PC-3 (cell line): ENCODE measurements at regions of chrX and their contacts with region 1.

Region 1: DNA sequence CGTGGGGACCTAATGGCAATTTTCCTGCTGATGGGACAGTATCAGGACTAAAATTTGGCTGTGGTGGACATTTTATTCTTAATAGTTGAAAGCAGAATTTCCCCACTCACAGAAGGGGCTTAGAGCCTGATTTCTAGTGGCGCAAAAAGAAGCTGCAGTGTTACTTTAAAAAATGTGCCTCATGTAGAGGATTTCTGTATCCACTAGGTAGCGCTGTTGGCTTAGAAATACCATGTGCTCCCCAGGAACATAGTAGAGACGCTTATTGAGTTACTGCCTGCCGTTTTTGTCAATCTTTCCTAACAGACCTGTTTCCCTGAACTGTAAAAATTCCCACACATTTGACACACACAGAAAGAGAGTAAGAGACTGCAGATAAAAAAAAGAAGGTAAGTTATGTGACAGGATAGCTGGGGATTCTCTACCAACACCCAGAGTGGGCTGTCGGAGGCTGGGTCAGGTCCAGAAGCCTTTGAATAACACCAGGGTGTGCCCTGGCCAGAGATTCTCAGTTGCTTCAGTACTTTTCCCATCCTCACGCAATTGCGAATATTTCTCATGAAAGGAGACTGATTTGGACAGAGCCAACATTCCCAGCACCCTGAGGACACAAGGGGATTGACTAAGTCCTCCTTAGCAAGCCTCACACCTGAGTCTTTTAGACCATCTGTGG is 88.4 kb downstream of the ZXDA start:
- DNase-seq: peak; percentile 75
- ATAC-seq: peak; percentile 77
- H3K4me3 ChIP-seq: peak overlapping the region; percentile 37
- H3K27ac ChIP-seq: no peak overlapping the region
- H3K4me1 ChIP-seq: no peaks in the 10 kb centered on the region
- H3K27me3 ChIP-seq: no peaks in the 10 kb centered on the region
- CTCF ChIP-seq: peak; percentile 74

Region 2: GRCh38 chrX:57528670-57529255 is 293.1 kb before region 1 on chrX:
- CTCF ChIA-PET with region 1: no interaction called
- POLR2A ChIA-PET with region 1: no interaction called
- intact Hi-C with region 1: loop called (anchors 5 kb)
- DNase-seq: peak; percentile 56
- ATAC-seq: peak; percentile 95
- H3K4me3 ChIP-seq: no peak overlapping the region
- H3K27ac ChIP-seq: no peak overlapping the region
- H3K4me1 ChIP-seq: no peaks in the 10 kb centered on the region
- H3K27me3 ChIP-seq: no peaks in the 10 kb centered on the region
- CTCF ChIP-seq: peak; percentile 89

Region 3: DNA sequence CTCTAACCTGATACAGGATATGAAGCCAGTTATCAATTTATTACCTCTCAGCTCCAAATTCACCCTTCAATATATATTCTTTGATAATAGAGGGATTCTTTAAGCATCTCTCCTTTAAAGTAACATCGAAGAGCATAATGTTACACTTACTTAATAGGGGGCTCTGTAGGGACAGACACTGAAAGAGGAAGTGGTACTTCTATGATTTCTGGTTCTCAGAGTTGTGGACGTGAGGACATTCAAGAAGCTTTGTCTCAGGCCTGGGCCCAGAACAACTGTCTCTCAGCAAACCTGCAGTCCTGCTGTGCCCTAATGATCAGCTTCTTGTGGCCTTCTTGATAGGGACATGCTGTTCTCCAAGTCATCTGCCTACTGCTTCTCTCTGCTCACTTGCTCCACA is 234.2 kb before region 1 on chrX:
- CTCF ChIA-PET with region 1: no interaction called
- POLR2A ChIA-PET with region 1: no interaction called
- intact Hi-C with region 1: loop called (anchors 5 kb)
- DNase-seq: no peak
- ATAC-seq: no peak
- H3K4me3 ChIP-seq: no peak overlapping the region
- H3K27ac ChIP-seq: no peak overlapping the region
- H3K4me1 ChIP-seq: peaks cover 21% of the 10 kb centered on the region
- H3K27me3 ChIP-seq: no peaks in the 10 kb centered on the region
- CTCF ChIP-seq: no peak

Region 4: DNA sequence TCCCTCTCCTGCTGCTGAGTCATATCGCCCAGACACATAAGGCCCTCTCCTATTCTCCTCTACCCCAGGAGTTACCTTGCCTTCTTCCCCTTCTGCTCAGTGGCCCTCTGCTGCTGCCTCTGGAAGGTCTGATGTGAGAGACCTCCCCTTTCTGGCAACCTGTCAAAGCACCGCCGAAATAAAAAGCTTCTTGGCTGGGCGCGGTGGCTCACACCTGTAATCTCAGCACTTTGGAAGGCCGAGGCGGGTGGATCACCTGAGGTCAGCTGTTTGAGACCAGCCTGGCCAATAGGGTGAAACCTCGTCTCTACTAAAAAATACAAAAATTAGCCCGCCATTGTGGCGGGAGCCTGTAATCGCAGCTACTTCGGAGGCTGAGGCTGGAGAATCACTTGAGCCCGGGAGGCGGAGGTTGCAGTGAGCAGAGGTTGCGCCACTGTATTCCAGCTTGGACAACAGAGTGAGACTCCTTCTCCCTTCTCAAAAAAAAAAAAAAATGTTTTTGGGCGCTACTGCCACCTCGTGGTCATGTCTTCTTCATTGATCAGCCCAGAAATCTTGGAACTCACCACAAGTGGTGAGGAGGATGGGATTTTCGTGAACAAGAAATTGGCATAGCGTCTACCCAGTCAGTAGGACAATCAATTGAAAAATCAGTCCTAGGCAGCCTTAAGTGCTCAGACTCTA is 97.1 kb after region 1 on chrX:
- CTCF ChIA-PET with region 1: interaction called, 3 read pairs
- POLR2A ChIA-PET with region 1: no interaction called
- intact Hi-C with region 1: loop called (anchors 1 kb)
- DNase-seq: peak; percentile 71
- ATAC-seq: peak; percentile 49
- H3K4me3 ChIP-seq: no peak overlapping the region; the same call in 1 of the 2 replicates
- H3K27ac ChIP-seq: no peak overlapping the region
- H3K4me1 ChIP-seq: no peaks in the 10 kb centered on the region
- H3K27me3 ChIP-seq: no peaks in the 10 kb centered on the region
- CTCF ChIP-seq: peak; percentile 59

Region 5: GRCh38 chrX:58025979-58026378 is 204.1 kb after region 1 on chrX:
- CTCF ChIA-PET with region 1: interaction called, 5 read pairs
- POLR2A ChIA-PET with region 1: no interaction called
- intact Hi-C with region 1: loop called (anchors 1 kb)
- DNase-seq: peak; percentile 51
- ATAC-seq: peak; percentile 54; the same call in 1 of the 2 replicates
- H3K4me3 ChIP-seq: no peak overlapping the region
- H3K27ac ChIP-seq: no peak overlapping the region
- H3K4me1 ChIP-seq: no peaks in the 10 kb centered on the region
- H3K27me3 ChIP-seq: no peaks in the 10 kb centered on the region
- CTCF ChIP-seq: peak; percentile 72